GM12878 (cell line): ENCODE measurements at regions of chr3 and their contacts with region 1.

Region 1: GRCh38 chr3:128725932-128726690 is at the start of gene RAB7A:
- DNase-seq: peak; percentile 96
- ATAC-seq: peak; percentile 92
- H3K4me3 ChIP-seq: peak within 1 kb of the TSS; percentile 79
- H3K27ac ChIP-seq: peak within 1 kb of the TSS; percentile 86
- H3K4me1 ChIP-seq: peaks cover 12% of the 10 kb centered on the region
- H3K27me3 ChIP-seq: no peaks in the 10 kb centered on the region
- CTCF ChIP-seq: 0 out of 6 replicates have a peak, but pooled peaks of 1 of the 3 experiments have one; percentile 2
- EP300 ChIP-seq: no peak
- POLR2A ChIP-seq: peak; percentile 95
- RAD21 ChIP-seq: no peak
- polyA plus RNA-seq, gene RAB7A: 40.3 to 43.0 TPM

Region 2: GRCh38 chr3:128650096-128651050 is 75.7 kb before region 1 on chr3 and contains the start of gene RPN1:
- CTCF ChIA-PET with region 1: no interaction called
- POLR2A ChIA-PET with region 1: interaction called, 3 read pairs
- RAD21 ChIA-PET with region 1: no interaction called
- SMC1A ChIA-PET with region 1: no interaction called
- in situ Hi-C with region 1: no loop called
- intact Hi-C with region 1: loop called (anchors 2 kb)
- DNase-seq: peak; percentile 74
- ATAC-seq: peak; percentile 98
- H3K4me3 ChIP-seq: peak within 1 kb of the TSS; percentile 100
- H3K27ac ChIP-seq: peak within 1 kb of the TSS; percentile 90
- H3K4me1 ChIP-seq: no peaks in the 10 kb centered on the region
- H3K27me3 ChIP-seq: no peaks in the 10 kb centered on the region
- CTCF ChIP-seq: no peak
- EP300 ChIP-seq: no peak
- POLR2A ChIP-seq: peak; percentile 94
- RAD21 ChIP-seq: no peak
- polyA plus RNA-seq, gene RPN1: 56.1 to 58.3 TPM

Region 3: GRCh38 chr3:128736601-128737000 is 10.5 kb after region 1 on chr3:
- CTCF ChIA-PET with region 1: interaction called, 3 read pairs
- POLR2A ChIA-PET with region 1: interaction called, 11 read pairs
- RAD21 ChIA-PET with region 1: no interaction called
- SMC1A ChIA-PET with region 1: interaction called, 11 read pairs
- in situ Hi-C with region 1: no loop called
- intact Hi-C with region 1: no loop called
- DNase-seq: no peak
- ATAC-seq: no peak
- H3K4me3 ChIP-seq: no peak overlapping the region
- H3K27ac ChIP-seq: no peak overlapping the region
- H3K4me1 ChIP-seq: peaks cover 8% of the 10 kb centered on the region
- H3K27me3 ChIP-seq: no peaks in the 10 kb centered on the region
- CTCF ChIP-seq: no peak
- EP300 ChIP-seq: no peak
- POLR2A ChIP-seq: no peak
- RAD21 ChIP-seq: no peak

Region 4: GRCh38 chr3:128787256-128788240 is 61.4 kb after region 1 on chr3:
- CTCF ChIA-PET with region 1: interaction called, 5 read pairs
- POLR2A ChIA-PET with region 1: interaction called, 5 read pairs
- RAD21 ChIA-PET with region 1: interaction called, 3 read pairs
- SMC1A ChIA-PET with region 1: interaction called, 20 read pairs
- in situ Hi-C with region 1: no loop called
- intact Hi-C with region 1: loop called (anchors 5 kb)
- DNase-seq: no peak
- ATAC-seq: peak; percentile 87
- H3K4me3 ChIP-seq: peak overlapping the region; percentile 57; the same call in 1 of the 2 replicates
- H3K27ac ChIP-seq: peak overlapping the region; percentile 24
- H3K4me1 ChIP-seq: peaks cover 55% of the 10 kb centered on the region
- H3K27me3 ChIP-seq: no peaks in the 10 kb centered on the region
- CTCF ChIP-seq: peak; percentile 26 to 59 (median 59); a peak in 5 of 6 replicates
- EP300 ChIP-seq: no peak
- POLR2A ChIP-seq: no peak
- RAD21 ChIP-seq: peak; percentile 36; the same call in 1 of the 2 replicates

Region 5: DNA sequence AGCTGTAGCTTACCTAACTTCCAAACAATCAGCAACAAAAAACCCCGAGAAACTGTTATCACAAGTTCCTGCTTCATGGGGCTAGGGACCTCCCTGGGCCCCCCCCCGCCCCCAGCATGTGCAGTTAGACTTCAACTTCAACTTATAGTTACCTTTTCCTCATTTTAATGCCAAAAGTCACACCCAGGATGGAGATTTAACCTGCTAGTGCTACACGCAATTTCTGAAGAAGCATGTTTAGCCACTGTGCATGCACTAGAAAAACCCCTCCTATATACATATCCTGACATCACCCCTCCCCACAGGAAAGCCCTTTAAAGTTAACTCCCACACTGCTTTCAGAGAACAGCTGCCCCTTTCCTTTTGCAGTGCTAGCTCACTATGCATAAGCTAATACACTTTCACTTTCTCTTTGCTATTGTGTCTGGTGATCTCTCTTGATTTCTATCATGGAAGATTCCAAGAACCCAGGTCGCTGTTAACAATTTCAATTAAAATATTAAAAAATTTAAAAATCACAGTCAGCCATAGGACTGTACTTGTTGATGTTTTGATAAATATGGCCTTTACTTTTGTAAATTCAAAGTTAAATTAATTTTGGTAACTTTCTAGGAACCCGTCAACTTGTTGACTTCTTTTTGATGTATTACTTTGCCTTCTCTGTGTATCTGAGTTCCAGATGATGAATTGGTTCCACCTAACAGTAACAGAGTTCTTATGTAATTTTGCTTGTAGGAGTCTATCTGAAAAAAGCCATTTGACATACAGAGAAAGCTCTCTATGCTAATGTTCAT is 78.1 kb after region 1 on chr3:
- CTCF ChIA-PET with region 1: interaction called, 3 read pairs
- POLR2A ChIA-PET with region 1: interaction called, 5 read pairs
- RAD21 ChIA-PET with region 1: interaction called, 9 read pairs
- SMC1A ChIA-PET with region 1: interaction called, 5 read pairs
- in situ Hi-C with region 1: no loop called
- intact Hi-C with region 1: loop called (anchors 2 kb)
- DNase-seq: peak; percentile 83
- ATAC-seq: peak; percentile 97
- H3K4me3 ChIP-seq: no peak overlapping the region
- H3K27ac ChIP-seq: peak overlapping the region; percentile 49
- H3K4me1 ChIP-seq: peaks cover 33% of the 10 kb centered on the region
- H3K27me3 ChIP-seq: no peaks in the 10 kb centered on the region
- CTCF ChIP-seq: no peak
- EP300 ChIP-seq: peak; percentile 12 to 55; a peak in 3 of 4 replicates
- POLR2A ChIP-seq: no peak
- RAD21 ChIP-seq: no peak